ENCODE measurements at regions of chr7 and their contacts with region 1.

Region 1: DNA sequence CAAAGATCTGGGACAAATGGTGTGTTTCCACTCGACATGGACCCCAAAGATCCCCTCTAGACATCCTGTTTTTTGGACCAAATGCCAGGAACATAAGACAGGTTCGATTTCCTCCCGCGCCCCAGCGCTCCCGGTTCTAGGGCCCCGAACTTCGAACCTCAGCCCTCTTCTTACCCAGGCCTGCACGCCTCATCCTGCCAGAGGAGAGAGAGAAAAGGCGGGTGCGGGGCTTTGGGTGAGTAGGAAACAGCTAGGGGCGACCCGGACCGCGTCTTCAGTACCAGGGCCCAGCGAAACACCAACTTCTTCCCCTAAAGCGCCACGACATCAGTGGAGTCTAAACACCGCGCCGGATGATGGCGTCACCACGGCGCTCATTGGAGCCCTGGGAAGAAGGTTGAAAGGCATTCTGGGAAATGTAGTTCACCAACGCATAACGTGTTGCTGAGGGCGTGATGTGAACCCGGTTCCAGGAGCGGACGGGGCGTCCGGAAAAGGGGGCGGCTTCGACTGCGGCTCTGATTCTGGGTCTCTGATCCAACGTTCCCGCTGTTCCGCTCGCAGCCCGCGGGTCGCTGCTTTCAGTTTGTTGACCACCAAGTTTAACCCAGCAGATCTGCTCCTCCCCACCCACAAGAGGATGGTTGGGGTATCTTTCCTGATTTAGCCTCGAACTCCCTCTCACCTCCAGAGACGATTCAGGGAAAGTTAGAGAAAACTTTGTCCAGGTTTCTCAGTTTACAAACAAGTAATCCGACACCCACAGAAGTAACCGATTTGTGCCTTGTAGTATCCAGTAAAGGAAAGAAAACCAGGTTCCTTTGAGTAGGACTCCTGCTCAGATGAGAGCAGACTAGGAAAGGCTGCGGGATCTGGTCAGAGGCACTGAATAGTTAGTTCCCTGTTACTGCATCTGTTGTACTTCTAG is at the start of gene BET1:
- DNase-seq: peak; percentile 93
- H3K4me3 ChIP-seq: peak within 1 kb of the TSS; percentile 71 to 79 (median 74)
- H3K27ac ChIP-seq: peak within 1 kb of the TSS; percentile 79
- H3K4me1 ChIP-seq: no peaks in the 10 kb centered on the region
- H3K27me3 ChIP-seq: no peaks in the 10 kb centered on the region
- CTCF ChIP-seq: no peak
- total RNA-seq, gene BET1: 20.8 to 29.0 TPM

Region 2: DNA sequence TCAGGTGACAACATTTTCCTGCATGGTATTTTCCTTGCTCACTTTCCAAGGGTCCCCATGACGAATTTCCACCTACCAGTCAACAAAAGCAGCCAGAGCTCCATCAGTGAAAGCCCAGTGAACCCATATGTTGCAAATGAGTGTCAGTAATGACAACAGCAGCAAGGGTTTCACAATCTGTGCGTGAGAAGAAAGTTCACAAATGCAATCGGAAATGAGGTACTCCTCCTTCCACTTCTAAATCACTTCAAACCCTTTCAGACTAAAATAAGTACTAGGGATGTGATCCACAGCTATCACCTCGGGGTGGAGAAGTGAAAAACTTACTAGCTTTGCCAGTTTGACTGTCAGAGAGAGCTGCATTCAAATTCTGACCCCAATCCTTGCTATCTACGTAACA is 55.5 kb after region 1 on chr7:
- CTCF ChIA-PET with region 1: no interaction called
- dilution Hi-C with region 1: no loop called
- in situ Hi-C with region 1: loop called in 1 of 2 experiments (anchors 10 kb)
- intact Hi-C with region 1: loop called (anchors 2 kb)
- DNase-seq: no peak
- H3K4me3 ChIP-seq: no peak overlapping the region
- H3K27ac ChIP-seq: no peak overlapping the region
- H3K4me1 ChIP-seq: peaks cover 17% of the 10 kb centered on the region
- H3K27me3 ChIP-seq: no peaks in the 10 kb centered on the region
- CTCF ChIP-seq: no peak

Region 3: GRCh38 chr7:94087664-94088352 is 83.5 kb after region 1 on chr7:
- CTCF ChIA-PET with region 1: no interaction called
- dilution Hi-C with region 1: no loop called
- in situ Hi-C with region 1: no loop called
- intact Hi-C with region 1: loop called (anchors 1 kb)
- DNase-seq: peak; percentile 62
- H3K4me3 ChIP-seq: no peak overlapping the region
- H3K27ac ChIP-seq: no peak overlapping the region
- H3K4me1 ChIP-seq: no peaks in the 10 kb centered on the region
- H3K27me3 ChIP-seq: peaks cover 8% of the 10 kb centered on the region
- CTCF ChIP-seq: peak; percentile 82 to 86